GM12878 (cell line): ENCODE measurements at regions of chr17 and their contacts with region 1.

Region 1: GRCh38 chr17:50478391-50479381 is at the start of gene RSAD1:
- DNase-seq: peak; percentile 60
- ATAC-seq: peak; percentile 93
- H3K4me3 ChIP-seq: peak within 1 kb of the TSS; percentile 80
- H3K27ac ChIP-seq: peak within 1 kb of the TSS; percentile 38
- H3K4me1 ChIP-seq: no peaks in the 10 kb centered on the region
- H3K27me3 ChIP-seq: no peaks in the 10 kb centered on the region
- CTCF ChIP-seq: peak; percentile 71 to 87 (median 73)
- EP300 ChIP-seq: no peak
- POLR2A ChIP-seq: peak; percentile 96
- RAD21 ChIP-seq: peak; percentile 54
- polyA plus RNA-seq, gene RSAD1: 2.5 to 6.2 TPM

Region 2: GRCh38 chr17:50361561-50362480 is 116.9 kb before region 1 on chr17:
- CTCF ChIA-PET with region 1: interaction called, 36 read pairs
- POLR2A ChIA-PET with region 1: no interaction called
- RAD21 ChIA-PET with region 1: interaction called, 17 read pairs
- SMC1A ChIA-PET with region 1: interaction called, 14 read pairs
- in situ Hi-C with region 1: no loop called
- intact Hi-C with region 1: loop called (anchors 1 kb)
- DNase-seq: no peak
- ATAC-seq: peak; percentile 94
- H3K4me3 ChIP-seq: no peak overlapping the region
- H3K27ac ChIP-seq: no peak overlapping the region
- H3K4me1 ChIP-seq: no peaks in the 10 kb centered on the region
- H3K27me3 ChIP-seq: no peaks in the 10 kb centered on the region
- CTCF ChIP-seq: peak; percentile 79 to 83 (median 80)
- EP300 ChIP-seq: no peak
- POLR2A ChIP-seq: 0 out of 2 replicates have a peak, but pooled peaks have one; percentile 28
- RAD21 ChIP-seq: peak; percentile 63

Region 3: GRCh38 chr17:50425682-50426471 is 52.8 kb before region 1 on chr17 and contains the start of gene ACSF2:
- CTCF ChIA-PET with region 1: interaction called, 6 read pairs
- POLR2A ChIA-PET with region 1: no interaction called
- RAD21 ChIA-PET with region 1: interaction called, 11 read pairs
- SMC1A ChIA-PET with region 1: interaction called, 4 read pairs
- in situ Hi-C with region 1: no loop called
- intact Hi-C with region 1: no loop called
- DNase-seq: no peak
- ATAC-seq: peak; percentile 88
- H3K4me3 ChIP-seq: peak within 1 kb of the TSS; percentile 84
- H3K27ac ChIP-seq: peak within 1 kb of the TSS; percentile 74
- H3K4me1 ChIP-seq: peaks cover 26% of the 10 kb centered on the region
- H3K27me3 ChIP-seq: no peaks in the 10 kb centered on the region
- CTCF ChIP-seq: no peak
- EP300 ChIP-seq: no peak
- POLR2A ChIP-seq: peak; percentile 80
- RAD21 ChIP-seq: no peak
- polyA plus RNA-seq, gene ACSF2: 10.4 to 14.8 TPM

Region 4: GRCh38 chr17:50501054-50501453 is 22.4 kb after region 1 on chr17:
- CTCF ChIA-PET with region 1: interaction called, 23 read pairs
- POLR2A ChIA-PET with region 1: no interaction called
- RAD21 ChIA-PET with region 1: interaction called, 6 read pairs
- SMC1A ChIA-PET with region 1: interaction called, 8 read pairs
- in situ Hi-C with region 1: no loop called
- intact Hi-C with region 1: no loop called
- DNase-seq: no peak
- ATAC-seq: no peak
- H3K4me3 ChIP-seq: no peak overlapping the region
- H3K27ac ChIP-seq: no peak overlapping the region
- H3K4me1 ChIP-seq: no peaks in the 10 kb centered on the region
- H3K27me3 ChIP-seq: no peaks in the 10 kb centered on the region
- CTCF ChIP-seq: peak; percentile 27 to 45 (median 38); a peak in 5 of 6 replicates
- EP300 ChIP-seq: no peak
- POLR2A ChIP-seq: no peak
- RAD21 ChIP-seq: no peak

Region 5: GRCh38 chr17:50541716-50542688 is 63.3 kb after region 1 on chr17:
- CTCF ChIA-PET with region 1: interaction called, 6 read pairs
- POLR2A ChIA-PET with region 1: no interaction called
- RAD21 ChIA-PET with region 1: interaction called, 13 read pairs
- SMC1A ChIA-PET with region 1: interaction called, 8 read pairs
- in situ Hi-C with region 1: no loop called
- intact Hi-C with region 1: loop called (anchors 1 kb)
- DNase-seq: no peak
- ATAC-seq: peak; percentile 92
- H3K4me3 ChIP-seq: peak overlapping the region; percentile 55
- H3K27ac ChIP-seq: no peak overlapping the region
- H3K4me1 ChIP-seq: peaks cover 10% of the 10 kb centered on the region
- H3K27me3 ChIP-seq: no peaks in the 10 kb centered on the region
- CTCF ChIP-seq: peak; percentile 18 to 39 (median 26); a peak in 3 of 6 replicates
- EP300 ChIP-seq: no peak
- POLR2A ChIP-seq: peak; percentile 61
- RAD21 ChIP-seq: no peak

Region 6: GRCh38 chr17:50697663-50698274 is 219.1 kb after region 1 on chr17:
- CTCF ChIA-PET with region 1: interaction called, 10 read pairs
- POLR2A ChIA-PET with region 1: no interaction called
- RAD21 ChIA-PET with region 1: interaction called, 5 read pairs
- SMC1A ChIA-PET with region 1: interaction called, 10 read pairs
- in situ Hi-C with region 1: no loop called
- intact Hi-C with region 1: loop called (anchors 1 kb)
- DNase-seq: no peak
- ATAC-seq: no peak
- H3K4me3 ChIP-seq: no peak overlapping the region
- H3K27ac ChIP-seq: no peak overlapping the region
- H3K4me1 ChIP-seq: peaks cover 13% of the 10 kb centered on the region
- H3K27me3 ChIP-seq: no peaks in the 10 kb centered on the region
- CTCF ChIP-seq: no peak; a peak in 1 of 6 replicates
- EP300 ChIP-seq: no peak
- POLR2A ChIP-seq: no peak
- RAD21 ChIP-seq: no peak